Common myeloid progenitor, CD34-positive (primary cell): ENCODE measurements at regions of chr5 and their contacts with region 1.

Region 1: DNA sequence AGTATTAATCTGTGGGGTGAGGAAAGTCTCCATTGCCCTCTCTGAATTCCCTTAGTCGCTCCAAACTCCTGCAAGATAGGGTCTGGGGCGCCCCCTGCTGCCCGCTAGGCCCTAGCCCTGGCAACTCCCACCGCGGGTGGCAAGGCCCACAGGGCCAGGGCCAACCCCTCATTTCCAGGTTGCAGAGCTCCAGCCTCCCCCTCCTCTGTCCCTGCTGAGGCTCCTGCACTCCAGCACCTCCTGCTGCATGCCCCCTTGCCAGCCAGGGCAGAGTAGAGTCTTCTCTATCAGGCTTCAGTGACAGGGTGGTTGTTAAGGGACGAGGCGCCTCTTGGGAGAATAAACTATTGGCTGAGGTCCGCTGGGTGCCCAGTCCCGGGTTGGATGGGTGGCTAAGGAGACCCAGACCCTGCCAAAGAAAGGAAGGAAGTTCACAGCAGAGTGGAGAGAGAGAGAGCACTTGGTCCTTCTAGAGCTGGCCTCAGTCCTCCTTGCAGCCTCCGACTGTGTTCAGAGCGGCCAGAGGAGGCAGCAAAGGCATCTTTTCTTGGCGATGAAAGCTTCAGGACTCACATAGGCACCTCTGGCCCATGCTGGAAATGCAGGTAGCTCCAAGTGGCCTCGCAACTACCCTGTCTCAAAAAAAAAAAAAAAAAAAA is 45.6 kb downstream of the SAR1B start:
- DNase-seq: peak; percentile 93 to 96 (median 95)
- H3K4me3 ChIP-seq: peak overlapping the region in 3 of 7 experiments; percentile 32 to 46 (median 42)
- H3K27ac ChIP-seq: no peak overlapping the region
- H3K4me1 ChIP-seq: peaks cover 0 to 9% (median 4%) of the 10 kb centered on the region in 4 experiments
- H3K27me3 ChIP-seq: no peaks in the 10 kb centered on the region

Region 2: DNA sequence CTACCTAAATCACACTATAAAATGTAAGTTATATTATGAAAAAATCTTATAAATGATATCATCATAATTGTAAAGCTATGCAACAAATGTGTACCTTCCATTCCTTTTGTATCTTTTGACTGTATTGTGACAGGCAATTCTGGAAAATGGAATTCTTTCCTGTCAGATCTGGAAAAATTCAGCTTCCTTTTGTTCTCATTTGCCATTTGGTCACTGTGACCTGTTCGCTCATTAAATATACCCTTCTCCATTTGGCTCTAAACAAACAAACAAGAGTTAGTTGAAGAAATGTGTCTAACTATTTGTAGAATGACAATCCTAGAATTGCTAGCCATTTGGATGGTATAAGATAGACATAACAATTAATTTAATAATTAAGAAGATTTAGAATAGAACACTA is 282.7 kb before region 1 on chr5:
- CTCF ChIA-PET with region 1: interaction called, 10 read pairs
- POLR2A ChIA-PET with region 1: no interaction called
- DNase-seq: no peak
- H3K4me3 ChIP-seq: no peak overlapping the region
- H3K27ac ChIP-seq: no peak overlapping the region
- H3K4me1 ChIP-seq: no peaks in the 10 kb centered on the region
- H3K27me3 ChIP-seq: no peaks in the 10 kb centered on the region

Region 3: DNA sequence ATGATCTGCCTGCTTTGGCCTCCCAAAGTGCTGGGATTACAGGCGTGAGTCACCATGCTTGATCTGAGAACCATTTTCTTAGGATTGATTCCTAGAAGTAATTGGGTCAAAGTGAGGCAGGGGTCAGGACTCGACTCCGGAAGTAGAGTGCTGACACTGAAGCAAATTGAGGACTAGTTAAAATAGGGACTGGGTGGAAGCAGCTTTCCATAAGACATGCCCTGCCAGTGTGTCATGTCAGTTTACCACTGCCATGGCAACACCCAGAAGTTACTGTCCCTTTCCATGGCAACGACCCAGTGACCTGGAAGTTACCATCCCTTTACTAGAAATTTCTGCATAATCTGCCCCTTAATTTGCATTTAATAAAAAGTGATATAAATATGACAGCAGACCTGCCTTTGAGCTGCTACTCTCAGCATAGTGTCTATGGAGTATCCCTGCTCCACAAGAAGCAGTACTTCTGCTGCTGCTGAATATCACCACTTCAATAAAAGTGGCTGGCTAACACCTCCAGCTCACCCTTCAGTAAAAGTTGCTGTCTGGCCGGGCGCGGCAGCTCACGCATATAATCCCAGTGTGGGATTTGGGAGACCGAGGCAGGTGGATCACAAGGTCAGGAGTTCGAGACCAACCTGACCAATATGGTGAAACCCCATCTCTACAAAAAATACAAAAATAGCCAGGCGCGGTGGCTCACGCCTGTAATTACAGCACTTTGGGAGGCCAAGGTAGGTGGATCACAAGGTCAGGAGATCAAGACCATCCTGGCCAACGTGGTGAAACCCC is 109.3 kb before region 1 on chr5:
- CTCF ChIA-PET with region 1: no interaction called
- POLR2A ChIA-PET with region 1: no interaction called
- DNase-seq: peak in 2 of 3 donors; percentile 19 to 41
- H3K4me3 ChIP-seq: no peak overlapping the region
- H3K27ac ChIP-seq: no peak overlapping the region
- H3K4me1 ChIP-seq: no peaks in the 10 kb centered on the region
- H3K27me3 ChIP-seq: no peaks in the 10 kb centered on the region